ENCODE measurements at regions of chr2 and their contacts with region 1.

Region 1: DNA sequence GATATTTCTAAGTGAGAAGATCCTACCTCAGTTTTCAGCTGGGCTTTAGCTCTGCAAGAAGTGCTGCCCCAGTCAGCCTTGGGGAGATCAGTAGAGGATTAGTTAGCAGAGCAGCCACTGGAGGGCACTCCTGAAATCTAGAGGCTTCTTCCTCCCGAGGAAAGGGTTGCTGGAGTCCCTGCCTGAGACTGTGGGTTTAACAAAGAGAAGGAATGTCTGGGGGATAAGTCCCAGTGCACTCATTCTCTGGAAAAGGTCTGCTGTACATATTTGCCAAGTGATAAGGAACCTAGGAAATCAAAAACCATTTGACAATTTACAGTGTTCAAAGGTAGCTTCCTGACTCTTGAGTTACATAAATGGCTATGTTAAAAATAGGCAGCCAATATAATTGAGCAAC is 207.2 kb downstream of the SLC8A1 start:
- DNase-seq: peak; percentile 72
- ATAC-seq: peak; percentile 95
- H3K4me3 Mint-ChIP-seq: no peak overlapping the region
- H3K27ac Mint-ChIP-seq: no peak overlapping the region
- H3K4me1 Mint-ChIP-seq: peaks cover 39% of the 10 kb centered on the region
- H3K27me3 Mint-ChIP-seq: no peaks in the 10 kb centered on the region
- CTCF ChIP-seq: no peak

Region 2: DNA sequence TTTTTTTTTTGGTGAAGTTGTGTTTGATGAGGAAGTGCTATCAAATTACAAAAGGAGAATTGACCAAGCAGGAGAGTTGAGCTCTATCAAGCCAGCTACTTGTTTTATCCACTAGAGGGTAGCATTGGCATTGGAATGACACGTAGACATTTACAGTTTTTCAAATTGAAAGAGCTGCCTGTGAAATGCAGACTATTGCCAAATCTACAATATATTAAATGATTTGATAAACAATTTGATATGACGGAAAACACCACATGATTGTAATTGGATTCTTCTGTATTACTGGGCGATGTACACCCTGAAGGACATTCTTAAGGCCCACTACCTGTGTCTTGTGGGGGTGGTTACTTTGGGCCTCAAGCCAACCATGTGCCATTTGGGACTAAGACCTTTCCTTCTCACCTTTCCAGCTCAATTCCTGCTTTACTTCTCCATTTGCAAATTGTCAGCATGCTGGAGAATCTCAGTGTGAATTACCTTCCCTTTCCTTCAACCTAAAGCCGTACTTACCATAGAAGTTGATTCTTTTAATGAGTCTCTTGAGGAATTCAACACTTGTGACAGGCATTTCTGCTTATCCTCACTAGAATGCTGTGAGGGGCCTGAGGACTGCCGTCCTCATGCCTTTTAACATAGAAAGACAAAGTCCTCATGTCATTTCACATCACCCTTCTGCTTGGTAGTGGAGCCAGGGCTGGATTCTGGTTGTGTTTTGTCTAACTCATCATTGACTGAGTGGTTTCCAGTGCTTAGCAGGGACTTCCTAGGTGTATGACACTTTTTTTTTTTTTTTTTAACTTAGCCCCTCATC is 330.8 kb before region 1 on chr2:
- CTCF ChIA-PET with region 1: interaction called, 46 read pairs
- POLR2A ChIA-PET with region 1: no interaction called
- DNase-seq: no peak
- ATAC-seq: peak; percentile 78
- H3K4me3 Mint-ChIP-seq: no peak overlapping the region
- H3K27ac Mint-ChIP-seq: no peak overlapping the region
- H3K4me1 Mint-ChIP-seq: peaks cover 20% of the 10 kb centered on the region
- H3K27me3 Mint-ChIP-seq: no peaks in the 10 kb centered on the region; the same call in 1 of the 2 replicates
- CTCF ChIP-seq: peak; percentile 42; the same call in 1 of the 2 replicates

Region 3: GRCh38 chr2:40256649-40257048 is 12.0 kb after region 1 on chr2:
- CTCF ChIA-PET with region 1: interaction called, 20 read pairs
- POLR2A ChIA-PET with region 1: no interaction called
- DNase-seq: peak; percentile 57
- ATAC-seq: peak; percentile 100
- H3K4me3 Mint-ChIP-seq: no peak overlapping the region
- H3K27ac Mint-ChIP-seq: peak overlapping the region; percentile 9; the same call in 1 of the 2 replicates
- H3K4me1 Mint-ChIP-seq: peaks cover 40% of the 10 kb centered on the region
- H3K27me3 Mint-ChIP-seq: no peaks in the 10 kb centered on the region
- CTCF ChIP-seq: no peak; the same call in 1 of the 2 replicates

Region 4: DNA sequence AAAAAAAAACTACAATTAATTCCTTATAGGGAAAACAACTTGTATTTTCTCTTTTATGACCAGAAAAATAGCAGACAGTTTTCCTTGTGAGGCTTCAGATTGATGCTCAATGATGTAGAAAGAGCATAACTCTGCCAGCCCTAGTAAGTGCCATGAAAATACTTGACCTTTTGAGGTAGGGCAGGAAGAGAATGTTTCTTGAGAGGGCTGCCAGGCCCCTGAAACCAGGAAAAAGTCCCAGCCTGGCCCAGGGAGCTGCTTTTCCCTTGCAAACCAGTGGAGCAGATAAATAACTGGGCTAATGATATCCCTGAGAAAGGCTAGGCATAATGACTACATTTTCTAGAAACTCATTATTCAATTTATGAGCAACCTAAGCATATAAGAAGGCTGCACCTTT is 80.4 kb after region 1 on chr2:
- CTCF ChIA-PET with region 1: no interaction called
- POLR2A ChIA-PET with region 1: no interaction called
- DNase-seq: no peak
- ATAC-seq: no peak
- H3K4me3 Mint-ChIP-seq: no peak overlapping the region
- H3K27ac Mint-ChIP-seq: no peak overlapping the region
- H3K4me1 Mint-ChIP-seq: peaks cover 3% of the 10 kb centered on the region
- H3K27me3 Mint-ChIP-seq: no peaks in the 10 kb centered on the region
- CTCF ChIP-seq: no peak

Measured in WTC11 (cell line).